GM23248 (cell line): ENCODE measurements at regions of chr14 and their contacts with region 1.

Region 1: DNA sequence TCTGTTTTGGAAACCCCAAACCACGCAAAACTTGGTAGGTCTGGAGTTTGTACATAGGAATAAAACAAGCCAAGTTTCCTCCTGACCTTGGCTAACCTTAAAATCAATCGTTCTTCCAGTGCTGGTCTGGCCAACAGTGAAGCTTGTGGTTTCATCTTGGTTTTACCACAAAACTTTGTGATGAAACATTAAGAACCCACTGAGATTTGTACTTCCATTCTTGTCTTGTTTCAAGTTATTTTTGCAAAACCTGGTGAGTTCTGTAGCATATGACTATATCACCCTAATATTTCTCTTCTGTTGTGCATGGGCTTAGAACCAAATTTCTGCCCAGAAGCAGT is 26.4 kb downstream of the SIX1 start:
- DNase-seq: peak; percentile 53
- H3K4me3 ChIP-seq: 0 out of 2 replicates have a peak overlapping the region, but pooled peaks have one; percentile 3
- H3K27ac ChIP-seq: peak overlapping the region; percentile 47
- H3K4me1 ChIP-seq: peaks cover 35% of the 10 kb centered on the region
- H3K27me3 ChIP-seq: no peaks in the 10 kb centered on the region

Region 2: DNA sequence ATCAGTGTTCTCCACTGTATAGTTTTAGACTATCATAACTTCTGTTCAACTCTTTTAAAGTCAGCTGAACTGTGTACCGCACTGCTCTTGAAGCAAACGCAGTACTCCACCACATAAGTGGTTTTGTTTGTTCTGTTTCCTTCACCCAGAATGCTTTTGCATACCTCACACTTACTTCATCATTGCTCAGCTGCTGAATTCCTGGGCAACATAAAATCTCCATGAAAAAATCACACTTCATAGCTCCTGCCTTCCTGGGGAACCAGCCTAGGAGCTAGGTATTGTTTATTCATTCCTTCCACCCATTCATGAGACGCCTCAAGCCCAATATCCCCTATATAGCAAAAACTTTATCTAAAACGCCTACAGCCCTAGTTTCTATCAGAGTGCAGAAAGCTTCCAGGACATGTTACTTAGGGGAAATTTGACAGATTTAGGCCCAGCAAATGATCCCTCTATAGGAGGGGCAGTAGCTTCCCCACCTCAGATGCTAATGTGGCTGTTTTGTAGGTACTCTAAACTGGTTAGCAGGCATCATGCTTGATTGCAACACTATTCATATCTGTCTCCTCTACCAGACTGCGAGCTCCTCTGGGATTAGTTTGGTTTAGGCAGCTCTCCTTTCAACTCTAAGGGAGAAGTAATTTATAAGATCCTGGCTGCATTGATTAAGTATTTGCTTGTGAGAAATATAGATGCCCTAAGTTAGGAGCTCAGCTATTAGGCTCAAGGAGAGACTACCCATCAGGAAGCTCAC is 658.5 kb before region 1 on chr14:
- in situ Hi-C with region 1: no loop called
- DNase-seq: peak; percentile 28
- H3K4me3 ChIP-seq: no peak overlapping the region
- H3K27ac ChIP-seq: no peak overlapping the region
- H3K4me1 ChIP-seq: 0 out of 2 replicates have a peak, but pooled peaks cover 7% of the 10 kb centered on the region
- H3K27me3 ChIP-seq: no peaks in the 10 kb centered on the region

Region 3: GRCh38 chr14:61252369-61253063 is 629.6 kb after region 1 on chr14:
- in situ Hi-C with region 1: loop called (anchors 10 kb)
- DNase-seq: peak; percentile 97
- H3K4me3 ChIP-seq: no peak overlapping the region
- H3K27ac ChIP-seq: peak overlapping the region; percentile 72
- H3K4me1 ChIP-seq: peaks cover 30% of the 10 kb centered on the region
- H3K27me3 ChIP-seq: no peaks in the 10 kb centered on the region